ENCODE measurements at regions of chr19 and their contacts with region 1.

Region 1: DNA sequence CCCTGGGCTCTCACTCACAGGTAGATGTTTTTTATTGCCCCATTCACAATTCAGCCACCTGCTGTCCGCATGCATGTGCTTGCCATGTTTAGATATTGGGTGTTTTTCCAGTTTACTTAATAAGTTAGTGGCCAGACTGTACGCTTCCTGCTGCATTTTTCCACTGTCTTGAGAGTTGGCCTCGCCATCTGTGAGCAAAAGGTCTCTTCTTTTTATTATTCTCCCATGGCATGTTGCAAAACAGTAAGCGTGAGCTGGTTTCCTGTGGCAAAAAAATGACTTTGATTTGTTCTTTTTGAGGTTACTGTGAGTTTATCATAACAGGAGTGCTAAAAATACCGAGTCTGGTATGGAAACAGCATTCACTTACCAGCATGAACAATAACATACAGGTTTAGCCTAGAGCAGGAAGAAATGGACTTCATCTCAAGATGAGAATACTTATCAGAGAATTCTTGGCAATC is 46.0 kb downstream of the SAE1 start:
- DNase-seq: no peak
- ATAC-seq: no peak
- H3K4me3 ChIP-seq: no peak overlapping the region
- H3K27ac ChIP-seq: no peak overlapping the region
- H3K4me1 ChIP-seq: peaks cover 0 to 3% of the 10 kb centered on the region in 2 experiments; a peak in 2 of 5 replicates
- H3K27me3 ChIP-seq: no peaks in the 10 kb centered on the region
- CTCF ChIP-seq: no peak
- EP300 ChIP-seq: no peak
- POLR2A ChIP-seq: no peak
- RAD21 ChIP-seq: no peak

Region 2: DNA sequence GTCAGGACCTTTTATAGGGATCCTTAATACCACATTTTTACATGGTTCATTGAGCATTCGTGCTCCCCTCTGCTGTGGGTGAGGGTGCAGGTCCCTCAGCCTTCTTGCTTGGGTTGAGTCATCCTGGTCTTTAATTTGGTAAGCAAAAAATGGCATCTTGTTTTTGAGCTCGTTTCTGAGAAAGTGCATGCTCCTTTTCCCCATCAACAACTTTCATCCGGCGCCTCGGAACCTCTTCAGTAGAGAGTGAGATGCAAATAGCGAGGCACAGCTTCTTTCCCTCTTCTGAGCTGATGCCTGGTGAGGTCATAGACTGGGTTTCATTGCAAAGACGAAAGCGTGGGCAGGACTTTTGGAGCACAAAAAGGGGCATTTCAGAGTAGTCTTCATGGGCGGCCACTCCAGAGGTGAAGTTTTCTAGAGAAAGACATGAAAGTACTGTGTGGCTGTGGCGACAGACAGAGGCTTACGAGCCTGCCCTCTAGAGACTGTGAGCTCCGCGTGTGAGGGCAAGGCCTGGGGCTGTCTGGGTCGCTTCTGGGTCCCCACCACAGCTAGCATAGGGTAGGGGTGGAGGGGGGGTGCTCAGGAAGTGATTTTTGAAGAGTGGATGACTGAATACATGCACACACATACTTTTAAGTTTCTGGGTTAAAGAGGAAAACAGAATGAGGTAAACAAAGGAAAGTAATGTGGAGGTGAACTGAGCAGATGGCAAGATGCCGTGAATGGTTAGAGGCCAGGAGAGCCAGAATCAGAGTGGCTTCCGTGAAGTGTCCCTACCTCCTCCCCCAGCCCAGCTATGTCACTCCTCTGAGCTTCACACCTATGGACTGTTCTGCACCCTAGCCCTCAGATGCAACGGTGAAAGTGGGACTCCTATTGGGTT is 10.0 kb after region 1 on chr19:
- CTCF ChIA-PET with region 1: no interaction called
- POLR2A ChIA-PET with region 1: interaction called, 10 read pairs
- in situ Hi-C with region 1: no loop called
- intact Hi-C with region 1: no loop called
- DNase-seq: no peak
- ATAC-seq: no peak
- H3K4me3 ChIP-seq: no peak overlapping the region
- H3K27ac ChIP-seq: no peak overlapping the region; the same call in 2 of the 3 replicates
- H3K4me1 ChIP-seq: peaks cover 6 to 10% of the 10 kb centered on the region in 2 experiments; a peak in 3 of 5 replicates
- H3K27me3 ChIP-seq: no peaks in the 10 kb centered on the region
- CTCF ChIP-seq: no peak
- EP300 ChIP-seq: no peak
- POLR2A ChIP-seq: no peak
- RAD21 ChIP-seq: no peak

Region 3: DNA sequence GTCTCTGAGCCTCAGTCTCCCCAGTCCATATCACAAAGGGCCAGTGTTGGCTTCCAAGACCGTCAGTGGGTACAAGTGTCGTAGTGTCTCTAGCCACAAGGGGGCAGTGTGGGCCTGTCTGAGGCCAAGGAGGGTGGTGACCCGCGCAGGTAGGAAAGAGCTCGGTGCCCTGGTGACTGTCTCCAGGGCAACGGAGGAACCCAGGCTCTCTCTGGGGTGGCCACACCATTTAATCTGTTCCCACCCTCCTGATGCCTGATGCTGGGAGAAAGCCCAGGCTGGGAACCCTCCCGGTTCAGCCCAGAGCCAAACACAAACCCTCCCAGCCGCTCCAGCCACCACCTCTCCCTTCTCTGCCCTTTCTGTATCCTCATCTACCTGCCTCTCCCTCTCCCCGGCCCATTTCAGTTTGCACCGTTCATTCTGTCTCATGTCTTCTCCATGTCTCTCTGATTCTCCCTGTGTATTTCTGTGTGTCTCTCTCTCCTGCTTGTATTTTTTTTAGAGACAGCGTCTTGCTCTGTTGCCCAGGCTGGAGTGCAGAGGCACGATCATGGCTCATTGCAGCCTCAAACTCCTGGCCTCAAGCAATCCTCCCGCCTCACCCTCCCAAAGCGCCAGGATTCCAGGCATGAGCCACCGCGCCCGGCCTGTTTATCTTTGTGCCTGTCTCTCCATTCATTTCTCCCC is 260.2 kb after region 1 on chr19:
- CTCF ChIA-PET with region 1: no interaction called
- POLR2A ChIA-PET with region 1: no interaction called
- in situ Hi-C with region 1: no loop called
- intact Hi-C with region 1: no loop called
- DNase-seq: peak; percentile 79 to 85 (median 80)
- ATAC-seq: peak; percentile 97
- H3K4me3 ChIP-seq: no peak overlapping the region
- H3K27ac ChIP-seq: no peak overlapping the region
- H3K4me1 ChIP-seq: peaks cover 0 to 4% of the 10 kb centered on the region in 2 experiments; a peak in 2 of 5 replicates
- H3K27me3 ChIP-seq: peaks cover 3 to 6% of the 10 kb centered on the region in 2 experiments; a peak in 1 of 5 replicates
- CTCF ChIP-seq: peak; percentile 89 to 93 (median 93)
- EP300 ChIP-seq: no peak
- POLR2A ChIP-seq: no peak
- RAD21 ChIP-seq: peak; percentile 93 to 98

Measured in K562 (cell line).